Adrenal gland (tissue), 19 donors: ENCODE measurements at regions of chr5 and their contacts with region 1.

Region 1: DNA sequence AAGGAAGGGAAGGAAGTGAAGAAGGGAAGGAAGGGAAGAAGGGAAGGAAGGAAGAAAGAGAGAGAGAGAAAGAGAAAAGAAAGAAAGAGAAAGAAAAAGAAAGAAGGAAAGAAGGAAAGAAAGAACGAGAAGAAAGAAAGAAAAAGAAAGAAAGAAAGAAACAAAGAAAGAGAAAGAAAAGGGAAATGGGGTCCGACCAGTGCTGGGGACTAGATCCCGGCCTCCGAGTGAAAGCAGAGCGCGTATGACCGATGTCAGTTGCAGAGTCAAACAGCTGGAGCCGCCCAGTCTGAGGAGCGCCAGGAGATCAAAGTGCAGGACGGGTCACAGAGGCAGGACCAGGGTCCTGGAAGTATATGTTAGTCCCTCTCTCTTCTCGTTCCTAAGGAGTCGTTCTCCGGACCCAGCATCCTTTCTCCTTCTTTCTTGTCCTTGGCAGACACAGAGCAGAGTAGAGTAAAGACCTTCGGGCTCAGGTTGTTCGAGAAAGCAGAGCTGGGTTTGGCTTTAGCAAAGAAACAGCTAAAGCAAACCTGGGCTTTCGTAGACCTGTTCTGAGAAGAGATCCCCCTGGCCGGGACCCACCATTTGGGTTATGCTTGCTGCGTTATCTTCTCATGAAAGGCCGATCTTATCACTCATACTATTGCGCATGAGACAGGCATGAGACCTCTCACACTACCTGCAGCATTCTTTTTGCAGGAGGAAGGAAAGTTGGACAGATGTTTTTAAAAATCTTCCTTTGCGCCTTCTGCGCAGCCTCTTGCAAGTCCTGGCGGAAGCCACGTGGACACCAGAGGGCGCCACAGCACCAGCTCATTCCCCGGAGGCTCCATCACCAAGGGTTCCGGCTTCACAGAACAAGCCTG is 305.2 kb upstream of the MSX2 start:
- DNase-seq: peak; percentile 87 to 96 (median 93)
- H3K4me3 ChIP-seq: no peak overlapping the region
- H3K27ac ChIP-seq: no peak overlapping the region
- H3K4me1 ChIP-seq: no peaks in the 10 kb centered on the region
- H3K27me3 ChIP-seq: peaks cover 21% of the 10 kb centered on the region
- CTCF ChIP-seq: peak; percentile 86 to 95 (median 88)
- POLR2A ChIP-seq: no peak

Region 2: GRCh38 chr5:174735498-174736330 is 316.6 kb after region 1 on chr5:
- intact Hi-C with region 1: loop called in 1 of 2 experiments (anchors 2 kb)
- DNase-seq: peak in 4 of 7 donors; percentile 22 to 28 (median 27)
- H3K4me3 ChIP-seq: no peak overlapping the region
- H3K27ac ChIP-seq: no peak overlapping the region
- H3K4me1 ChIP-seq: no peaks in the 10 kb centered on the region
- H3K27me3 ChIP-seq: peaks cover 62% of the 10 kb centered on the region
- CTCF ChIP-seq: peak; percentile 9 to 56 (median 44)
- POLR2A ChIP-seq: no peak

Region 3: GRCh38 chr5:174793684-174794328 is 374.6 kb after region 1 on chr5:
- intact Hi-C with region 1: loop called (anchors 2 to 10 kb)
- DNase-seq: peak; percentile 22 to 74 (median 59)
- H3K4me3 ChIP-seq: no peak overlapping the region
- H3K27ac ChIP-seq: no peak overlapping the region
- H3K4me1 ChIP-seq: no peaks in the 10 kb centered on the region
- H3K27me3 ChIP-seq: peaks cover 28% of the 10 kb centered on the region
- CTCF ChIP-seq: peak; percentile 58 to 89 (median 78)
- POLR2A ChIP-seq: no peak

Region 4: DNA sequence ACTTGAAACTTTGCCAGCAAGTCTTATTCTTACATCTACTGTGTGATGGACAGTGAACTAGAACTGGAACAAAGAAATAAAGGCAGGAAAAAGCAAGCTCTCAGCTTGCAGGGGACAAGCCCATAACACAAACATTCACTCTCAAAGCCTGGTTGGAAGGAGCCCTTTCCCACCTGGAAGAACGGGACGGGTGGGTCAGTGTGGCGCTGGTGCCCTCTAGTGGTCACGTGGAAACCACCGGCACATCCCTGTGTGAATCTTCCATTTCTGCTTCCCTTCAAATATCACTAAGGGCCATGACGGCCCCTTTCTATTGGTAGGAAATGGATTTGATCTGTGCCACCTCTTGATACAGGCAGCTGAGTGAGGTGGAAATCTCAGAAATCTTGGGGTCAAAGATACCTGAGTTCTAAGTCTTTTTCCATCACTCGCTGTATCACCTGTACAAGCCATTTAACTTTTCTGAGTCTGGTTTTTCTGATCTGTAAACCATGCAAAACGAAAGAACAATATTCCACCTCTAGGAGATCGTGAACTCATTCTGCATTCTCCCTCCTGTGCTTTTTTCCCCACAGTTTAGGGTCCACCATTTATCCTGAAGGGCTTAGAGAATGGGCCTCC is 516.8 kb after region 1 on chr5:
- intact Hi-C with region 1: loop called in 1 of 2 experiments (anchors 10 kb)
- DNase-seq: peak; percentile 26 to 67 (median 52)
- H3K4me3 ChIP-seq: no peak overlapping the region
- H3K27ac ChIP-seq: no peak overlapping the region
- H3K4me1 ChIP-seq: no peaks in the 10 kb centered on the region
- H3K27me3 ChIP-seq: no peaks in the 10 kb centered on the region
- CTCF ChIP-seq: peak; percentile 57 to 89 (median 70)
- POLR2A ChIP-seq: no peak